Natural killer cell (primary cell): ENCODE measurements at regions of chr7 and their contacts with region 1.

Region 1: GRCh38 chr7:94657771-94658693 is 2.1 kb upstream of the SGCE start:
- DNase-seq: peak; percentile 88 to 97
- ATAC-seq: peak; percentile 83 to 95 (median 85)
- H3K4me3 ChIP-seq: peak overlapping the region; percentile 43
- H3K4me3 Mint-ChIP-seq: peak overlapping the region; percentile 84
- H3K27ac ChIP-seq: peak overlapping the region; percentile 42
- H3K27ac Mint-ChIP-seq: peak overlapping the region; percentile 30 to 71
- H3K4me1 ChIP-seq: peaks cover 28% of the 10 kb centered on the region
- H3K4me1 Mint-ChIP-seq: peaks cover 20 to 29% of the 10 kb centered on the region in 2 donors
- H3K27me3 ChIP-seq: peaks cover 18% of the 10 kb centered on the region
- H3K27me3 Mint-ChIP-seq: peaks cover 12 to 15% of the 10 kb centered on the region in 2 donors
- CTCF ChIP-seq: no peak

Region 2: GRCh38 chr7:94509879-94510581 is 148.0 kb before region 1 on chr7:
- intact Hi-C with region 1: loop called (anchors 5 kb)
- DNase-seq: peak; percentile 64 to 82
- ATAC-seq: peak; percentile 76 to 89 (median 81)
- H3K4me3 ChIP-seq: peak overlapping the region; percentile 81
- H3K4me3 Mint-ChIP-seq: peak overlapping the region; percentile 88
- H3K27ac ChIP-seq: peak overlapping the region; percentile 96
- H3K27ac Mint-ChIP-seq: peak overlapping the region in 1 of 2 donors; percentile 85
- H3K4me1 ChIP-seq: peaks cover 15% of the 10 kb centered on the region
- H3K4me1 Mint-ChIP-seq: peaks cover 31 to 35% of the 10 kb centered on the region in 2 donors
- H3K27me3 ChIP-seq: no peaks in the 10 kb centered on the region
- H3K27me3 Mint-ChIP-seq: no peaks in the 10 kb centered on the region
- CTCF ChIP-seq: no peak